Posterior cingulate gyrus (tissue), 11 donors: ENCODE measurements at regions of chr1 and their contacts with region 1.

Region 1: GRCh38 chr1:113835642-113836307 is 23.5 kb upstream of the RSBN1 start:
- DNase-seq: no peak

Region 2: GRCh38 chr1:114282751-114283403 is 447.1 kb after region 1 on chr1:
- intact Hi-C with region 1: loop called (anchors 2 kb)
- DNase-seq: peak; percentile 54 to 97 (median 86)